ENCODE measurements at regions of chr11 and their contacts with region 1.

Region 1: GRCh38 chr11:72831513-72832300 is 17.5 kb downstream of the ATG16L2 start:
- DNase-seq: peak; percentile 88 to 94
- H3K4me3 ChIP-seq: no peak overlapping the region
- H3K27ac ChIP-seq: peak overlapping the region; percentile 92 to 94
- H3K4me1 ChIP-seq: peaks cover 17 to 57% (median 55%) of the 10 kb centered on the region in 4 donors
- H3K27me3 ChIP-seq: no peaks in the 10 kb centered on the region
- CTCF ChIP-seq: peak; percentile 94 to 99

Region 2: DNA sequence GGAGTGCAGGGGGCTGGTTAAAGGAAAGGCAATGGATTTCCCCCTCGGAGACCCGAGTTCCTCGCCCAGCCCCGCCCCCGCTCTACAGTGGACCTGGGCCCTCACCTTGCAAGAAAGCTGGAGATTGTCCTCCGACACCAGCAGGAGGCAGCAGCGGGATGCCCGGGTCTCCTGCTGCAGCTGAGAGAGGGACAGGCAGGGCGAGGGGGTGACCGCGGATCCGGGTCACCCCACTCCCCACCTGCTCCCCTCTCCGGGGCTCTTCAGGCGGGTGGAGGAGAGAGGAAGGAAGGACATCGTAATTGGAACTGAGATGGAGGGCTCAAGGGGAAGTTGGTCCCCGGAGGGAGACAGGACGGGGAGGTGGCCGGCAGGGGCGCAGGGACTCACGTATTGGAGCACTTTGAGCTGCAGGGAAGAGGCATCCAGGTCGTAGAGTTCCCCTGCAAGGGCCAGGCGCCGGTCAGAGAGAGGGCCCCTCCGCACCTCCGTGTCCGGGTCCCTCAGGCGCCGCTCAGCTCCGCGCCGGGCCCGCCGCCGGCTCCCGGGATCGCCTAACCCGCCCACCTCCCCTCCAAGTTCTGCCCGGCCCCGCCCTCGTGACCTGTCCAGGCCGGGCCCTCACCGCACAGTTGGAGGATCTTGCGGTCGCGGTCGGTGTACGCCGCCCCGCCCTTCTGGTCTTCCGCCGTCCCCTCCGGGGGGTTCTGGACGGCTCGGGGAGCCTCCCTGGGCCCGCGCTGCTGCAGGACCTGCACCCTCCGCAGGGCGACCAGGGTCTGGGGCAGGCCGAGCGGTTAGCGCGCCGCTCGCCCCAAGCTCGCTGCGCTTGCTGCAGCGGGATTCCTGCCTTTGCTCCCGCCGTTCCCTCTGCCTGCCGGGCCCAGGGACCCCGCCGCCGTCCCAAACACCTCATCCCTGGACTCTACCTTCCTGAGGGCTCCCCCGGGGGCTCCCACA is 241.6 kb before region 1 on chr11:
- intact Hi-C with region 1: no loop called
- DNase-seq: no peak
- H3K4me3 ChIP-seq: peak overlapping the region in 1 of 2 donors; percentile 37
- H3K27ac ChIP-seq: no peak overlapping the region
- H3K4me1 ChIP-seq: peaks cover 0 to 12% (median 10%) of the 10 kb centered on the region in 4 donors
- H3K27me3 ChIP-seq: peaks cover 0 to 66% of the 10 kb centered on the region in 2 donors
- CTCF ChIP-seq: peak in 1 of 2 experiments; percentile 23

Region 3: DNA sequence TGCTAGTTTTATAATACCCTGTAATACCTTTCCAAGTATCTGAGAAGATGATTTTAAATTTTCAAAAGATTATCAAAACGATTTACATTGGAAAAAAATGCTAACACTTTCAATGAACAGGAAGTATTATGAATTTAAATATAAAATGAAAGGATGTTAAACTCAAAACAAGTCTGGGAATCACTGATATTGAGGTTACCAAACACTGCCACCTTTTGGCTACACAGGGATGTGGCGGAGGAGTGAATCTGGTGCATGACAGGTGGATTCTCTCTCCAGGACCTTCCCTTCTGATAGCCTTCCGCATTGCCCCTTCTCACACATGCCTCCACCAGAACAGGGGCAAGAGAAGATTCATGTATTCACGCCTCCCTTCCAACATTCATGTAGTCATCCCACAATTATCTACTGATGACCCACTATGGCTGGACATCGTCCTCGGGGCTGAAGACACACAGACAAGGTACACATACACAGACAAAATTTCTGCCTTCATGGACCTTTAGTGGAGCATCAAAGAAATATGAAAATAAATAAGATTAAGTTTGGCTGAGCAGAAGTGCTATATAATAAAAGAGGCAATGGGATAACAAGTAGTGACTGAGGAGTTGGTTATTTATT is 17.2 kb after region 1 on chr11:
- intact Hi-C with region 1: loop called (anchors 2 kb)
- DNase-seq: no peak
- H3K4me3 ChIP-seq: no peak overlapping the region
- H3K27ac ChIP-seq: peak overlapping the region; percentile 57 to 64
- H3K4me1 ChIP-seq: peaks cover 0 to 43% (median 5%) of the 10 kb centered on the region in 4 donors
- H3K27me3 ChIP-seq: no peaks in the 10 kb centered on the region
- CTCF ChIP-seq: peak; percentile 61 to 68

Region 4: GRCh38 chr11:72896431-72896830 is 64.7 kb after region 1 on chr11:
- intact Hi-C with region 1: no loop called
- DNase-seq: no peak
- H3K4me3 ChIP-seq: no peak overlapping the region
- H3K27ac ChIP-seq: no peak overlapping the region
- H3K4me1 ChIP-seq: no peaks in the 10 kb centered on the region
- H3K27me3 ChIP-seq: no peaks in the 10 kb centered on the region
- CTCF ChIP-seq: no peak

Region 5: DNA sequence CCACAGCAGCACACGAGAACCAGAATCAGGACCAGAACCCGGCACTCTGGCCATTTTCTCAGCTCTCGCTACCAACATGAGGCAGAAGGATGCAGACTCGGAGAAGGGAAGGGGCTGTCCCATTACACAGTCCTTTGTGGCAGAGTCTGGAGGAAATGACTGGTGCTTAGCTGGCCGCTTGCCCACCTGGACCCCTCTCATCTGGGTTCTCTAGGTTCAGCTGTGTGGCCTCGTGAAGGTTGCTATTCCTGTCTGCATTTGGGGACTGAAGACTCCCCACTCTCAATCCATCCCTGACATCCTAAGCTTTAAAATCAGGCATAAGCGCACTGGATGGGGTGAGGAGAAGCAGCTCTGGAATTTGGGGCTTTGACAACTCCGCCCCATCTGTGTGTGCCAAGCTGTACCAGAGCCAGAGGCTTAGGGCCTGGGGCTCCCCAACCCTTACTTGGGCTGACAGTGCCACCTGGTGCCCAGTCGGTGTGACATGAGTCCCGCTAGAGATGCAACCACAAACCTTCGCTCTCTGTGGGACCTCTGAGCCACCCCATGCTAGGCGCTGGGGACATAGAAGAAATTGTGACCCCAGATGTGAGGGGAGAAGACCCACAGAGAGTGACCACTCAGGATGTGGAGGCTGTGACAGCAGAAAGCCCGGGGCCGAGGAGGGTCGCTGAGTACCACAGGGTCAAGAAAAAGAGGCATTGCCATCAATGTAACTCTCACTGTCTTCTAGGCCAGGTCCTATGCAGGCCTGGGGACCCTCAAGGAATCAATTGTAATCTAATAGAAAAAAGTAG is 346.3 kb after region 1 on chr11:
- intact Hi-C with region 1: loop called (anchors 2 kb)
- DNase-seq: peak; percentile 85 to 94
- H3K4me3 ChIP-seq: no peak overlapping the region
- H3K27ac ChIP-seq: peak overlapping the region; percentile 64 to 82
- H3K4me1 ChIP-seq: peaks cover 0 to 54% (median 39%) of the 10 kb centered on the region in 4 donors
- H3K27me3 ChIP-seq: no peaks in the 10 kb centered on the region
- CTCF ChIP-seq: peak; percentile 77 to 97